GM18951 (cell line): ENCODE measurements at regions of chr18 and their contacts with region 1.

Region 1: GRCh38 chr18:3593904-3594661 is 144.1 kb downstream of the TGIF1 start:
- POLR2A ChIP-seq: peak; percentile 38

Region 2: DNA sequence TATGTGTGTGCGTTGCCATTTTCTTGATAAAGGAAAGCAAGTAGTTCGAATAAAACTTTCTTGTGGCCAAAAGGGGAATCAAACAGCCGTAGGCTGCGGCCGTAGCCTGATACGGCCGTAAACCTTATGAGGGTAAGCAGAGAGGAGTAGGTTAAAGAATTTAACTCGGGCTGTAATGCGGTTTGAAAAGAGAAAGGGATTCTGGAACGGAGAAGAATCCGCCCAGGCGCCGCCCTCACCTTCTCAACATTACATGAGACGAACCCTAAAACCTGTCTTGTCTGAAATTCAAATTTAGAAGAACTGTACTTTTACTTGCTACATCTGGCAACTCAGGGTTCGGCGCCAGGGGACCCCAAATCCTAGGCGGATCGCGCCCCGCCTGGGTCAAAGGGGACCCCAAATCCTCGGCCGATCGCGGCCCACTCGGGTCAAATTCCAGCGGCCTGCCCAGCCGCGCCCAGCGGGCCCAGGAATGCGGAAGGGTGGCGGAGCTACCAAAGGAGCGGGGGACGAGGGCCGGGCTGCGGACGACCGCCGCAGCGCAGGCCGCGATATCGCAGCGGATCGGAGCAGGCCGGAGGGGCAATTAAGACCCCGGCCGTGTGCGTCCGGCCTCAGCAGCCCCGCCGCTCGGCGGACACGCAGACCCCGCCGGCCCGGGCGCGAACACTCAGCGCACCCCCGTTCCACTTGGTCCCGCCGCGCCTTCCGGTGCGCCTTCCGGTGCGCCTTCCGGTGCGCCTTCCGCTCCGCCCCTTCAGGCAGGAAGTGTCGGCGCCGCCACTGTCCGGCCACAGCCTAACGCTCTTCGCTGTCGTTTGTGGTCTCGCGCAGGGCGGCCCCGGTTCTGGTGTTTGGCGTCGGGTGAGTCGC is 332.5 kb before region 1 on chr18 and contains the start of gene MYL12B:
- in situ Hi-C with region 1: loop called (anchors 5 kb)
- POLR2A ChIP-seq: peak; percentile 81

Region 3: DNA sequence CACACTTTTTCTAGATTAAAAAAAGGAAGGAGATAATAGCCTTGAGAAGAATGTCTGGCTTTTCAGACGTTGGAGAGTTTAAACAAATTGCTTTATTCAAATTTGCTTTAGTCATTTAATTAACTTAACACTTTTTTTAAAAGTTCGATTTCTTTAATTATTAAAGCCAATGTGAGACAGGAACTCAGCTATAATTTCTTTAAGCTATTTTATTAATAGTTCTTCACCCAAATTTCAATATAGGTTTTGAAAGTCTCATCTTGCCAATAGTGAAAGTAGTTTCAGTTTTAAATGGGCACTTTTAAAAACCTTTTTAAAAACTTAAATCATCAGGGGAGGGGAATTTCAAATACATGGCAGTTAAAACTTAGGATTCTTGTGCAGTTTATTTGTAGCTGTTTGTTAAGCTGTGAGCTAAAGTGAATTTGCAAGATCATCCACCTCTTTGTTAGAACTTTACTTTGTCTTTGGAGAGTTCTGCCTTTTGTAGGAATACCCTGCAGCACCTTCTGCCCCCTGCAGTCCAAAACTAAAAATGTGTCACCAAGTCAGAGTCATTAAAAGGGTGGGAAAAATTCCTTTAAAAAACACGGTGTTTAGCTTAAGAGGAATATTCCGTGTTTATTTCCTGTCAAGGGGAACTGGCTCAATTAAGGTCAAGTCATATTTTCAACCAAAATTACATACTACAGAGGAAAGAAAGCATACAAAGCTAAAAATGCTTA is 139.6 kb before region 1 on chr18:
- in situ Hi-C with region 1: loop called (anchors 5 kb)
- POLR2A ChIP-seq: no peak

Region 4: DNA sequence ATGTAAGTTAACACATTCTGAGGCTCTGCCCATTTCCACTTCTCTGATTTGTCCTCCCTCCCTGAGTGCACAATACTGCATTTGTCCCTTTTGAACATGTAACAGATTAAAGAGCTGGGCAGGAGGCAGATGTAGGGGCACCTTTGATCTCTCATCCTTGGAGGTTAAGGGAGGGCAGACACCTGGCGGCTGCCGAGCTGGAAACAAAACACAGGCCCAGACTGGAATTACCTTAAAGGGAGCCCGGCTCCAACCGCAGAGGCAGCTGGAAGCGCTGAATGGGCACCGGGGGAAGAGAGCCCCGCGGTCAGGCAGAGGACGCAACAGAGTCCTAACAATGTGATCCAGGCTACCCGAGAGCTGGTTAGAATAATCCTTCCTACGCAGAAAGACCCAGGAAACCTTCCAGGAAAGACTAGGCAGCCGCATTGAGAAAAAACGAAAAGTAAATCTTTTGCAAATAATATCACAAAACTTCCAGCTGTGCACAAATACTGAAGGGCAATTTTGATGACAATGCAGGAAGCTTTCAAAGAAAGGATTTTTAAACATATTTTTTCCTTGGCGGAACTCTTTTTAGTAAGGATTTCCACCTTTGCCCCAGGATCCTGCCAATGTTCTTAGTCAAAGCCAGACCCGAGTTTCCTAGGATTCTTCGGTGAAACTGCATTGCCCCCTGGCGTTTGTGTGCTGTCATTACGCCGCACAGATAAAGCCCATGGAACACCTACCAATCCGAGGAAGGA is 71.9 kb after region 1 on chr18:
- in situ Hi-C with region 1: loop called (anchors 10 kb)
- POLR2A ChIP-seq: no peak

Region 5: GRCh38 chr18:3782901-3783300 is 188.8 kb after region 1 on chr18:
- in situ Hi-C with region 1: no loop called
- POLR2A ChIP-seq: no peak

Region 6: GRCh38 chr18:4211111-4211837 is 617.2 kb after region 1 on chr18:
- in situ Hi-C with region 1: no loop called
- POLR2A ChIP-seq: no peak